ENCODE measurements at regions of chr10 and their contacts with region 1.

Region 1: GRCh38 chr10:101060036-101060950 is 1.5 kb upstream of the KAZALD1 start:
- DNase-seq: peak; percentile 96
- H3K4me3 Mint-ChIP-seq: peak overlapping the region; percentile 87
- H3K27ac Mint-ChIP-seq: peak overlapping the region; percentile 93
- H3K4me1 Mint-ChIP-seq: peaks cover 29% of the 10 kb centered on the region
- H3K27me3 Mint-ChIP-seq: peaks cover 24% of the 10 kb centered on the region

Region 2: DNA sequence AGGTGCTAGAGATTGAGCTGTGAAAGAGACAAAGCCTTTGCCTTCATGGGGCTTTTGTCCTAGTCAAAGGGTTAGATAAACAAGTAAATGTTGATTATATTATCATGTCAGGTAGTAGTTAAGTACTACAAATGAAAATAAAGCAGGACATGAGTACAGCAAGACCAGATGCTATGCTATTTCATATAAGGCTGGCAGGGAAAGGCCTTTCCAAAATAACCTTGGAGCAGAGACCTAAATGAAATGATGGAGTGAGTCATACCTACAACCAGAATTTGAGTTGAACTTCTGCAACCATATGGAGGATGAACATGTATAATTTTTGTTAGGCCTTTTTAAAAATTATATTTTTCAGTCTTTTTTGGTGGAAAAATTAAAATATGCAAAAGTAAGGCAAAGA is 114.5 kb before region 1 on chr10:
- CTCF ChIA-PET with region 1: no interaction called
- intact Hi-C with region 1: no loop called
- DNase-seq: no peak
- H3K4me3 Mint-ChIP-seq: no peak overlapping the region
- H3K27ac Mint-ChIP-seq: no peak overlapping the region
- H3K4me1 Mint-ChIP-seq: peaks cover 21% of the 10 kb centered on the region
- H3K27me3 Mint-ChIP-seq: no peaks in the 10 kb centered on the region

Region 3: DNA sequence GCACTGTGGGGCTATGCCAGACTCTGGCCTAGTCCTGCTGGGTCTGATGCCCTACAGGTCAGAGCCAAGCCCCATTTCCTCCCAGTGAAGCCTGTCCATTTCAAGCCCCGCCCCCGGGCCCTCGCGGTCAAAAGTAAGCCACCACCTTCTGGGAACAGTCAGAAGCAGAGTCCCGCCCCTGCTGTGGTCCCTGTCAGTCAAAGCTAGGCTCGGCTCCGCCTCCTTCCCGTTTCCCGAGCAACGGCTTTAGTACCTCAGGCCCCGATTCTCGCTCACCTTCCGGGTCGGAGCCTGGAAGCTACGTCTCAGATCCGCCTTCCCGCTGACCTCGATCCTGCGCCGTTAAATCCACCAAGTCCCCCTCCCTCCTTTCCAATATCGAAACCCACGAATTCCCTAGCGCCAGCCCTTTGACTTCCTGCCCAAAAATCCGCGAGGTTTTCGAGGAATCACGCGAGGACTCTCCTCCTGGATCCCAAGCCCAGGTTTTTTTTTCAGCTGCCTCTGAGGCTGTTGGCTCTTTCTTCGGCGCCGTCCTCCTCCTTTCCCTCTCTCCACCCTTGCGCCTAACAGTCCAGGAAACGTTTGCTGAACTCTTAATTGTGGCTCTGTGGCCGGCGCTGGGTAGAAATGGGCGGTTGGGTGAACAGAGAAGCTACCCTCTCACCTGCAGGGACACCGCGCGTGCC is 17.5 kb before region 1 on chr10:
- CTCF ChIA-PET with region 1: interaction called, 326 read pairs
- intact Hi-C with region 1: loop called (anchors 1 kb)
- DNase-seq: peak; percentile 97
- H3K4me3 Mint-ChIP-seq: peak overlapping the region; percentile 91
- H3K27ac Mint-ChIP-seq: peak overlapping the region; percentile 74
- H3K4me1 Mint-ChIP-seq: peaks cover 22% of the 10 kb centered on the region
- H3K27me3 Mint-ChIP-seq: peaks cover 17% of the 10 kb centered on the region

Region 4: DNA sequence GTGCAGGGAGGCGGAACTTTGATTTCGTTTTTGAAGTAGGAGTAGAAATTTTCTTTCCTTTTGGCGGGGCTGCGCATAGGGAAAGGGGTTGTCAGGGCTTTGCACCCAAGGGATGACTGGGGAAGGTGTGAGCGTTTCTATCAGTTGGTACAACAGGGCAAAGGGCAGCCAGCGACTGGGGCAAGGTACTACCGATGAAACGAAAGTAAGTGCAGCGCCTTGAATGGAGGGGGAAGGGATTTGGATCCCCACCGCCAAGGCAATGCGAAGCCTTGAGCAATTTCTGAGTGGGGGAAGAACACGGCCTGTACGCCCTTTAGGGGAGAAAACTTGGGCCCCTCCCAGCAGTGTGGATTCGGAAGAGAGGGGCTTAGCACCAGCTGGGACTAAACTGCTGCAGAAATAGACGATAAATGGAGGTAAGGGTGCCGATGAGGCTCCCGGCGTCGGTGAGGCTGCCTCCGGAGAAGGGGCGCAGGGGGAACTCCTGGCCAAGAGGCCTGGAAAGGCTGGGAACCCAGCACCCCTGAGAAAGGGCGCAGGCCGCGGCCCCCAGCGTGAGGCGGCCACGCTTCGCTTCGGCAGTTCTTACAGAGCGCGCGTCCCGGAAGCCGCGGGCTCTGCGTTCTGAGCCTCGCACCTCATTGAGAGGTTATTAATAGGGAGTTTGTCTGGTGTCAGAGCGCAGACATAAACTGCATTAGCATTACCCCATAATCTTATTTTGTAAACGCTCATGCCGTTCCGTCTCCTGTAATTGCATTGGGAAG is 60.8 kb after region 1 on chr10:
- CTCF ChIA-PET with region 1: interaction called, 3 read pairs
- intact Hi-C with region 1: loop called (anchors 2 kb)
- DNase-seq: peak; percentile 52
- H3K4me3 Mint-ChIP-seq: peak overlapping the region; percentile 86
- H3K27ac Mint-ChIP-seq: no peak overlapping the region
- H3K4me1 Mint-ChIP-seq: peaks cover 26% of the 10 kb centered on the region
- H3K27me3 Mint-ChIP-seq: peaks cover 41% of the 10 kb centered on the region